ENCODE measurements at regions of chr11 and their contacts with region 1.

Region 1: GRCh38 chr11:86802601-86803051 is 2.3 kb downstream of the PRSS23 start:
- DNase-seq: no peak
- ATAC-seq: peak; percentile 24

Region 2: GRCh38 chr11:86608251-86608799 is 194.3 kb before region 1 on chr11:
- intact Hi-C with region 1: loop called (anchors 5 kb)
- DNase-seq: peak; percentile 70
- ATAC-seq: peak; percentile 87

Measured in left ventricle myocardium superior (tissue), 1 donor.